Activated CD8-positive, alpha-beta T cell treated with anti-CD3 and anti-CD28 coated beads for 36 hours (primary cell): ENCODE measurements at regions of chr2 and their contacts with region 1.

Region 1: DNA sequence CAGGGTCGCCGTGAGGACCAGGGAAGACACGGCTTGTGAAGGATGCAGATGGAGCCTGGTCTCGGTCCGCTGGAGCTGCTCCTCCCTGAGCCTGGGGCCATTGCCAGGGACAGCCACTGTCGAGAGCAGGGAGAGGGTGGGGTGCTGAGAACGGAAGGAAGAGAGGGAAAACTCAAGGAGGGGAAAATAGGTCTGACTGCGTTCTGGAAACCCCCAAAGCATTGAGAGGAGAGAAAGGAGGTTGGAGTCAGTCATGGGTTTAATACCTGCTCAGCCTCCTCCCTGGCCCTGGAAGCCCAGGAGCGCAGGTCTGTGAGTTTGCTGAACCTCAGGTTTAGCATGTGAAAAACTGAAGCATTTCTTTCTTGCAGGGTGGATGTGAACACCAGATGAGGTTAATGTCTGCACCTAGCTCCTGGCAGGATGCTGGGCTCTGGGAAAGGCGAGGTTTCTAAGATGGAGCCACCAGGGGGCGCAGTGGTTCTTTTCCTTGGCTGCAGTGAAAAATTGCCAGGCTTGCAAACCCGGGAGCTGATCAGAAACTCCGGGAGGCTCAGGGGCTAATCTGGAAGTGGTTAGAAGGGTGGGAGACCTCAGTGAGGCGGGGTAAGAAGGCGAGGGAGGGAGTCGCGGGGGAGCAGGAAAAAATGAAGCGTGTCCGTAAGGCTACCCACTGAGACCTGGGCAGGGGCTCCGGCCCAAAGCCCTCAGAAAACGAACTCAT is 33.6 kb upstream of the RNF149 start:
- DNase-seq: peak; percentile 79
- ATAC-seq: peak; percentile 49
- H3K4me3 Mint-ChIP-seq: no peak overlapping the region
- H3K27ac Mint-ChIP-seq: peak overlapping the region; percentile 45
- H3K4me1 Mint-ChIP-seq: peaks cover 22% of the 10 kb centered on the region
- H3K27me3 Mint-ChIP-seq: no peaks in the 10 kb centered on the region
- CTCF ChIP-seq: peak; percentile 90

Region 2: DNA sequence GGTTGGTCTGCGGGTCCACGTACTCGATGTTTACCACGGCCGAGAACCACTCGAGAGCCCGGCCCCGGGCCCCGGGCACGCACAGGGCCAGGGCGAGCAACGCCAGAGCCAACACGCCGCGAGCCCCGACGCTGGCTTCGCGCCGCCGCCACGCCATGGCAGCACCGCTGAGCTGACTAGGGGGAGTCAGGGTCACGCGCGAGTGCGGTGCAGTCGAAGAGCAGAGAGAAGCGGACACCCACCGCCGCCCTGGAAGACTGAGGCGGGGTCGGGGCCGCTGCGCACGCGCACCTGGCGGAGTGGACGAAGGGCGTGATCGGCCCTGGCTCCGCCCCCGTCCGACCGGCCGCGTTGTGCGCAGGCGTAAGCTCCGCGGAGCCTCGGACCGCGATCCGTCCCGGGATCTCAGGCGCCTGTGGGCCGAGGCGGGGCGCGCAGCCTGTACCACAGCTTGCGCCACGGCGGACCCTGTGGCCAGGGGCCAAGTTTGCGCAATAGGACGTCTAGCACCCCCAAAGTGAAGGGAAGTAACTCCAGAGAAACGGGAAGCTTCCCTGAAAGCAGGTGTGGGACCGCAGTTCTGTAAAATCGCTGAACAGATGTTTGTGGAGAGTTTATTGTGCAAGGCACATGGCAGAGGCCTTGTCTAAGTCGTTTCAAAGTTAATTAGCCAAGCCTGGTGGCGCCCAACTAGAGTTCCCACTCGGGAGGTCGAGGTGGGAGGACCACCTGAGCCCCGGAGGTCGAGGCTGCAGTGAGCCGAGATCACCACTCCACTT is 33.4 kb before region 1 on chr2 and contains the start of gene RNF149:
- CTCF ChIA-PET with region 1: interaction called, 13 read pairs
- POLR2A ChIA-PET with region 1: interaction called, 4 read pairs
- intact Hi-C with region 1: no loop called
- DNase-seq: peak; percentile 91
- ATAC-seq: peak; percentile 77
- H3K4me3 Mint-ChIP-seq: peak within 1 kb of the TSS; percentile 95
- H3K27ac Mint-ChIP-seq: peak within 1 kb of the TSS; percentile 98
- H3K4me1 Mint-ChIP-seq: peaks cover 58% of the 10 kb centered on the region
- H3K27me3 Mint-ChIP-seq: no peaks in the 10 kb centered on the region
- CTCF ChIP-seq: no peak
- total RNA-seq, gene RNF149: 48.7 to 53.2 TPM

Region 3: DNA sequence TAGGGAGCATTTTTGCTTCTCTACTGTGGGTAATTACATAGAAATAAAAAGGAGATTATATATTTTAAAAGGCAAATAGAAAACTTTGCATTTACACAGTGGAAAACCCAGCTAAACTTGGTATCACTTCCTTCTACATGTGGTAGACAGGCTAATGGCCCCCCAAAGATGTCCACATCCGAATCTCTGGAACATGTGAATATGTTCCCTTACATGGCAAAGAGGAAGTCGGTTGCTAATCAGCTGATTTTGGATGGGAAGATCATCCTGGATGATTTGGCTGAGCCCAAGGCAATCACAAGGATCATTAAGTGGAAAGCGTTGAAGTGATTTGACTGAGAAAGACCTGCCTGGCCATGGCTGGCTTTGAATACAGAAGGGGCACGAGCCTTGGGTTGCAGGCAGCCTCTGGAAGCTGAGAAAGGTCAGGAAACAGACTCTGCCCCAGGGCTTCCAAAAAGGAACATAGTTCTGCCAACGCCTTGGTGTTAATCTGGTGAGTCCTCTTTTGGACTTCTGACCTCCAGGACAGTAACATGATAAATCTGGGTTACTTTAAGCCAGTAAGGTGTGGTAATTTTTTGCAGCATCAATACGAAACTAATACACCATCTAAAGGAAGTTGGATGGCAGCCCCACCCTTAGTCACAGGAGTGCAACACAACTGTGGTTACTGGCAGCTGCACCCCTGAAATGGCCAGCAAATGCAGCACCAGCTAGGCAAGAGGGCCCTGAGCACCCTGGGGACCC is 19.2 kb after region 1 on chr2:
- CTCF ChIA-PET with region 1: interaction called, 21 read pairs
- POLR2A ChIA-PET with region 1: no interaction called
- intact Hi-C with region 1: no loop called
- DNase-seq: peak; percentile 40
- ATAC-seq: peak; percentile 75
- H3K4me3 Mint-ChIP-seq: no peak overlapping the region
- H3K27ac Mint-ChIP-seq: no peak overlapping the region
- H3K4me1 Mint-ChIP-seq: peaks cover 15% of the 10 kb centered on the region
- H3K27me3 Mint-ChIP-seq: no peaks in the 10 kb centered on the region
- CTCF ChIP-seq: no peak

Region 4: GRCh38 chr2:101387151-101387807 is 45.2 kb after region 1 on chr2 and contains the start of gene CREG2:
- CTCF ChIA-PET with region 1: interaction called, 51 read pairs
- POLR2A ChIA-PET with region 1: no interaction called
- intact Hi-C with region 1: loop called (anchors 5 kb)
- DNase-seq: peak; percentile 69
- ATAC-seq: peak; percentile 96
- H3K4me3 Mint-ChIP-seq: peak within 1 kb of the TSS; percentile 56
- H3K27ac Mint-ChIP-seq: no peak within 1 kb of the TSS
- H3K4me1 Mint-ChIP-seq: peaks cover 5% of the 10 kb centered on the region
- H3K27me3 Mint-ChIP-seq: peaks cover 36% of the 10 kb centered on the region
- CTCF ChIP-seq: peak; percentile 78
- total RNA-seq, gene CREG2: not detected

Region 5: DNA sequence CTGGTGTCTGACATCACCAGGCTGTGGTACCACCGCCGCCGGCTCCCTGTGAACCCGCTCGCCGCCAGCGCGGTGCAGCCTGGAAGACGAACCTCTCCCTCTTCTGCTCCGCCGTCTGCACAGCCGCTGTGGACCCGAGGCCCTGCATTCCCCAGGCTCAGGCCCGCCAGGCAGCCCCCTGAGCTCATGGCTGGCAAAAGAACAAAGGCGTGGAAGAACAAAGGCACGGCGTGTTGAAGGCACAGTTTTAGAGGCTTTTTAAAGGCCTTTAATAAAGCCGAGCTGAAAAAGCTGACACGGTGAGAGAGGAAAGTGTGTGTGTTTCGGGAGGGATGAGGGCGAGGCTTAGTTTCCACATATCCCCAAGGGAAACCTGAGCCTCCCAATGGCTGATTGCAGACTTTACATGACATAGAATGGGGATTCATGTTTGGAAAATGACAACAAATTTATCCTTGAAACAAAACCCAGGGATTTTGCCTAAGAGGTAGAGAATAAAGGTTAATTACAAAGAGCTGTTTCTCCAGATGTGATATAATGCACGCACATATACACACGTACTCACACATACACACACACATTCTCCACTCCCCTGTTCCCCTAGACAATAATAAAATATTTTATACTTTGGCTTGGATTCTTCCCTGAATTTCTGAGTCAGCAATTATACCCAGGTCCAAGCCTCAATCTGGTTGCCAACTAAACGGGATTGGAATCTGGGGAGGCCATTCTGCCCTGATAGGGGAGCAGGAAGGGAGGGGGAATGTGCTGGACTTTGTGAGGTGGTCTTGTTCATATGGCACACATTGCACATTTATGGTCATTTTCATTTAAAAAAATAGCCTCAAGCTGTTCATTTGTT is 93.2 kb after region 1 on chr2:
- CTCF ChIA-PET with region 1: no interaction called
- POLR2A ChIA-PET with region 1: no interaction called
- intact Hi-C with region 1: no loop called
- DNase-seq: no peak
- ATAC-seq: no peak
- H3K4me3 Mint-ChIP-seq: no peak overlapping the region
- H3K27ac Mint-ChIP-seq: no peak overlapping the region
- H3K4me1 Mint-ChIP-seq: no peaks in the 10 kb centered on the region
- H3K27me3 Mint-ChIP-seq: no peaks in the 10 kb centered on the region
- CTCF ChIP-seq: no peak